Sigmoid colon (tissue), 7 donors: ENCODE measurements at regions of chr11 and their contacts with region 1.

Region 1: DNA sequence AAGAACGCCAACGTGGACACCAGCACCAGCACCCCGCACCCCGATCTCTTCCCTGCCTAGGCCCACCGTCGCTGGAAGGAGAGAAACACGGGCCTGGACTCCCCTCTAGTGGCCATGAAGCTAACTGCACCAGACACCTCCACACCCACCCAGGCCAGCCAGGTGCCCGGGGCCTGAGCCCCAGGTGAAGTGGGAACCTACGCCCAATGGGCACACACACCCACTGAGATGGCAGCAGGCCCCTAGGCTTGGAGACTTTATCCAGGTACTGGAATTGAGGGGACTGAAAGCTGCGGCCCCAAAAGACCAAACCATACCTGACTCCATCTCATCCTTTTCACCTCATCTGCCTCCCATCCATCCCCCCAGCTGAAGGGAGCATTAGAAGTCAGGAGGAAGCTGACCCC is 81.0 kb downstream of the BUD13 start:
- DNase-seq: peak; percentile 68
- H3K4me3 ChIP-seq: no peak overlapping the region
- H3K27ac ChIP-seq: no peak overlapping the region
- H3K4me1 ChIP-seq: no peaks in the 10 kb centered on the region
- H3K27me3 ChIP-seq: peaks cover 0 to 4% (median 0%) of the 10 kb centered on the region in 3 donors
- CTCF ChIP-seq: peak; percentile 79 to 89 (median 83)
- EP300 ChIP-seq: no peak
- POLR2A ChIP-seq: no peak

Region 2: GRCh38 chr11:115324581-115325432 is 1367.0 kb before region 1 on chr11:
- intact Hi-C with region 1: loop called (anchors 2 kb)
- DNase-seq: no peak
- H3K4me3 ChIP-seq: no peak overlapping the region
- H3K27ac ChIP-seq: no peak overlapping the region
- H3K4me1 ChIP-seq: peaks cover 0 to 6% (median 2%) of the 10 kb centered on the region in 4 donors
- H3K27me3 ChIP-seq: no peaks in the 10 kb centered on the region
- CTCF ChIP-seq: peak; percentile 57 to 81 (median 68)
- EP300 ChIP-seq: no peak
- POLR2A ChIP-seq: no peak

Region 3: GRCh38 chr11:115990004-115990447 is 701.7 kb before region 1 on chr11:
- intact Hi-C with region 1: loop called (anchors 10 kb)
- DNase-seq: no peak
- H3K4me3 ChIP-seq: no peak overlapping the region
- H3K27ac ChIP-seq: no peak overlapping the region
- H3K4me1 ChIP-seq: no peaks in the 10 kb centered on the region
- H3K27me3 ChIP-seq: no peaks in the 10 kb centered on the region
- CTCF ChIP-seq: peak in 3 of 4 experiments; percentile 31 to 65 (median 39)
- EP300 ChIP-seq: no peak
- POLR2A ChIP-seq: no peak

Region 4: GRCh38 chr11:116217006-116217405 is 474.8 kb before region 1 on chr11:
- intact Hi-C with region 1: loop called (anchors 10 kb)
- DNase-seq: no peak
- H3K4me3 ChIP-seq: no peak overlapping the region
- H3K27ac ChIP-seq: no peak overlapping the region
- H3K4me1 ChIP-seq: no peaks in the 10 kb centered on the region
- H3K27me3 ChIP-seq: no peaks in the 10 kb centered on the region
- CTCF ChIP-seq: peak in 3 of 4 experiments; percentile 39 to 85 (median 45)
- EP300 ChIP-seq: no peak
- POLR2A ChIP-seq: no peak

Region 5: GRCh38 chr11:116276051-116277044 is 415.4 kb before region 1 on chr11:
- intact Hi-C with region 1: loop called (anchors 10 kb)
- DNase-seq: peak; percentile 85
- H3K4me3 ChIP-seq: peak overlapping the region in 3 of 4 donors; percentile 27 to 35 (median 30)
- H3K27ac ChIP-seq: no peak overlapping the region
- H3K4me1 ChIP-seq: peaks cover 0 to 12% (median 3%) of the 10 kb centered on the region in 4 donors
- H3K27me3 ChIP-seq: no peaks in the 10 kb centered on the region
- CTCF ChIP-seq: peak; percentile 91 to 98 (median 96)
- EP300 ChIP-seq: no peak
- POLR2A ChIP-seq: no peak

Region 6: DNA sequence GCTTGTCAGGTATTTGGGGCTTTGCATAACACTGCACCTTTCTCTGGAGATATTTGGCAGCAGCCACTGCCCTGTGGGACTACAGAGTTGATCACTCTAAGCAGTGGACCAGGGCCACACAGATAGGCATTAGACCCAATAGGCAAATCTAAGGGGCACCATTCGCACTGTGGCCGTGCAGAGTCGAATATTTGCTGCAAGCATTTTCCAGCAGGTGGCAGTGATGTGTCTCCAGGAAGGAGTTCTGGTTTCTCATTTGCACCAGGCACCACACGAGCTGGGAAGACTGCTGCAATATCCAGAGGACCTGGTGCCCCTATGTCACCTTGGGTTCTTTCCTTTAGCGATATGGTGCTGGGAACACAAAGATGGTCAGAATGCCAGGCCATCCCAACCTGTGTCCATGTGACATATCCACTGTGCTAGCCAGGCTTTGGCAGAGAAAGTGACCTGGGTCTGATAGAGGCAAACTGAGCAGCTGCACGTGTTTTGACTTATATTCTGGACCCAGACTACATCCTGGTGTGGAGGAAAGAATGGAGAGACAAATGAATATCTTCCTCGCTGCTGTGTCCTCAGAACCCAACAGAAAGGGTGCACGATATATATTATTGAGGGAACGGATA is 237.6 kb before region 1 on chr11:
- intact Hi-C with region 1: loop called (anchors 1 kb)
- DNase-seq: peak; percentile 75
- H3K4me3 ChIP-seq: no peak overlapping the region
- H3K27ac ChIP-seq: no peak overlapping the region
- H3K4me1 ChIP-seq: peaks cover 0 to 27% (median 26%) of the 10 kb centered on the region in 4 donors
- H3K27me3 ChIP-seq: no peaks in the 10 kb centered on the region
- CTCF ChIP-seq: peak; percentile 61 to 76 (median 71)
- EP300 ChIP-seq: no peak
- POLR2A ChIP-seq: no peak

Region 7: GRCh38 chr11:116703421-116703820 is 11.6 kb after region 1 on chr11:
- intact Hi-C with region 1: no loop called
- DNase-seq: peak; percentile 61
- H3K4me3 ChIP-seq: no peak overlapping the region
- H3K27ac ChIP-seq: no peak overlapping the region
- H3K4me1 ChIP-seq: no peaks in the 10 kb centered on the region
- H3K27me3 ChIP-seq: peaks cover 0 to 13% (median 0%) of the 10 kb centered on the region in 3 donors
- CTCF ChIP-seq: no peak
- EP300 ChIP-seq: no peak
- POLR2A ChIP-seq: no peak